ENCODE measurements at regions of chr16 and their contacts with region 1.

Region 1: GRCh38 chr16:18048853-18049546 is 287.5 kb downstream of the NPIPA8 start:
- DNase-seq: no peak
- H3K4me3 ChIP-seq: no peak overlapping the region
- CTCF ChIP-seq: no peak

Region 2: GRCh38 chr16:17850574-17851250 is 198.3 kb before region 1 on chr16:
- in situ Hi-C with region 1: loop called (anchors 10 kb)
- DNase-seq: no peak
- H3K4me3 ChIP-seq: no peak overlapping the region
- CTCF ChIP-seq: no peak

Measured in astrocyte of the cerebellum (primary cell).